HCT116 (cell line): ENCODE measurements at regions of chr6 and their contacts with region 1.

Region 1: GRCh38 chr6:142207265-142207877 is 60.3 kb downstream of the VTA1 start:
- DNase-seq: peak; percentile 26
- ATAC-seq: peak; percentile 92
- H3K4me3 ChIP-seq: no peak overlapping the region
- H3K27ac ChIP-seq: no peak overlapping the region
- H3K4me1 ChIP-seq: no peaks in the 10 kb centered on the region
- H3K27me3 ChIP-seq: no peaks in the 10 kb centered on the region
- CTCF ChIP-seq: peak; percentile 53 to 93 (median 81); a peak in 5 of 6 replicates
- POLR2A ChIP-seq: no peak
- RAD21 ChIP-seq: peak; percentile 81

Region 2: DNA sequence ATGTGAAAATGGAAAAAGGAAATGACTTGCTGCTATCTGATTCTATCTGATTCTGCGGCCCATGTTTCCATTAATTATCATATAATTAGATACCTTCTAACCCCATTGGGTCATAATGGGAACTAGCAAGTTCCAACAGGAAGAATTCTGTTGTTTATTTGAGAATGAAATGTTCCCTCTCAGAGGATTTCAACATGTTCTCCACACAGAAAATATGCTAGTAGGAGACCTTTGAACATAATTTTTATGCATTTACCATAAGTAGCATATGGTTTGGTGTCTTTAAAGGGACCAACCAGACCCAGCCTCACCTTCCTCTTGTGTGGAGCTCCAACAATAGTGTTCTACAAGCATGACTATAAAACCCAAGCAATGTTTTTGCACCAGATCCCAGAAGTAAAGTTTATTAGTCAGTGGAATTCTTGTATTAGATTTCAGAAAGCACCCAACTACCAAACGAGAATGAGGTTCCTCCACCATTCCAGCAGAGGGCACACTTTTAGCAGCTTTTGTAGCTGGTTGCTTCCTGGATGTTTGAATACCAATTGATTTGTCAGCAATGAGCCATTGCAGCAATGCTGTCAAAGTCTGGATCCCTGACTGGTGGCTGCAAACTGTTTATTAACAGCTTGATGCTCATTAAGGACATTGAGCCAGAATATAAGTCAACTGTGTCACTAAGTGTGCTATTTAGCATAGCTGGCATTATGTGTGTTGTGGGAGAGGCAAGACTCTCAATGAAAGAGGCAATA is 218.2 kb before region 1 on chr6:
- CTCF ChIA-PET with region 1: interaction called, 5 read pairs
- POLR2A ChIA-PET with region 1: no interaction called
- RAD21 ChIA-PET with region 1: no interaction called
- intact Hi-C with region 1: loop called (anchors 1 kb)
- DNase-seq: peak; percentile 78
- ATAC-seq: peak; percentile 87
- H3K4me3 ChIP-seq: no peak overlapping the region
- H3K27ac ChIP-seq: 0 out of 2 replicates have a peak overlapping the region, but pooled peaks have one; percentile 18
- H3K4me1 ChIP-seq: peaks cover 0 to 9% of the 10 kb centered on the region in 2 experiments; a peak in 3 of 4 replicates
- H3K27me3 ChIP-seq: no peaks in the 10 kb centered on the region
- CTCF ChIP-seq: peak; percentile 82 to 94 (median 87)
- POLR2A ChIP-seq: no peak
- RAD21 ChIP-seq: peak; percentile 97

Region 3: DNA sequence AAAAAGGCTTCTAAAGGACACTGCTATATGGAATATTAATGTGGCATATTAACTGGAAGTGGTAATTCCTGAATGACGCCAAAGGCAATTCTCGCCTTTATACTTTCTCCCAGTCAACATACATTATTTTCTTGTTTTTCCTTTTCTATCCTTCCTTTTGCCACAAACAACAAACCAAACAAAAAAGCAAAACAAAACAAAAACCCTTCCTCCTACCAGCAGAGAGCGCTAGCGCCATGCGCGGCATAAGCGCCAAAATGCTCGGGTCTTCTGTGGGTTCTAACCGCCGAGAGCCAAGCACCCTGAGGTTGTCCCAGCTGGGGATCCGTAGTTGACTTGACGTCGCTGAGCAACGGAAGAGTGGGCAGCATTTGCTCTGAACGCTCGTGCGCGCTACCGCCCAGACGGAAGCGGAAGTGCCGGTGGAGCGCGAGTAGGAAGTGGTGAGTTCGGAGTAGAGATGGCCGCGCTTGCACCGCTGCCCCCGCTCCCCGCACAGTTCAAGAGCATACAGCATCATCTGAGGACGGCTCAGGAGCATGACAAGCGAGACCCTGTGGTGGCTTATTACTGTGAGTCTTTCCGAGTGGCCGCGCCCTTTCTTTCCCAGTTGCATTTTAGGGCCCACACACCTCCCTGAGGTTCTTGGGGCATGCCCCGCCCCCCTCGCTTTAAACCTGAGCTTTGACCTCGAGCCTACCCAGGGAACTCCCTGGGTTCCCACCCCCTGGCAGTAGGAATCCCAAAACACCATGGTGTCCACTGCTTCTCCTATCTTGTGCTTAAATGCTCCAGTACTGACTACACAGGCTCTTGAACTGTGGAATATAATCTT is 60.3 kb before region 1 on chr6 and contains the starts of genes NMBR and VTA1:
- CTCF ChIA-PET with region 1: interaction called, 5 read pairs
- POLR2A ChIA-PET with region 1: no interaction called
- RAD21 ChIA-PET with region 1: no interaction called
- intact Hi-C with region 1: loop called (anchors 2 kb)
- DNase-seq: peak; percentile 99
- ATAC-seq: peak; percentile 99
- H3K4me3 ChIP-seq: peak within 1 kb of the TSS; percentile 83
- H3K27ac ChIP-seq: peak within 1 kb of the TSS; percentile 27; the same call in 1 of the 2 replicates
- H3K4me1 ChIP-seq: peaks cover 7 to 15% of the 10 kb centered on the region in 2 experiments; a peak in 3 of 4 replicates
- H3K27me3 ChIP-seq: no peaks in the 10 kb centered on the region
- CTCF ChIP-seq: peak; percentile 82 to 89 (median 85)
- POLR2A ChIP-seq: peak; percentile 77
- RAD21 ChIP-seq: peak; percentile 91
- total RNA-seq, gene NMBR: not detected
- total RNA-seq, gene VTA1: 67.8 TPM

Region 4: GRCh38 chr6:142155895-142156757 is 51.2 kb before region 1 on chr6:
- CTCF ChIA-PET with region 1: interaction called, 13 read pairs
- POLR2A ChIA-PET with region 1: no interaction called
- RAD21 ChIA-PET with region 1: interaction called in 1 of 2 experiments, 3 read pairs
- intact Hi-C with region 1: no loop called
- DNase-seq: peak; percentile 2
- ATAC-seq: peak; percentile 62; the same call in 1 of the 2 replicates
- H3K4me3 ChIP-seq: no peak overlapping the region
- H3K27ac ChIP-seq: no peak overlapping the region
- H3K4me1 ChIP-seq: no peaks in the 10 kb centered on the region
- H3K27me3 ChIP-seq: no peaks in the 10 kb centered on the region
- CTCF ChIP-seq: peak in 2 of 3 experiments; percentile 50 to 58; a peak in 3 of 6 replicates
- POLR2A ChIP-seq: no peak
- RAD21 ChIP-seq: peak; percentile 57

Region 5: DNA sequence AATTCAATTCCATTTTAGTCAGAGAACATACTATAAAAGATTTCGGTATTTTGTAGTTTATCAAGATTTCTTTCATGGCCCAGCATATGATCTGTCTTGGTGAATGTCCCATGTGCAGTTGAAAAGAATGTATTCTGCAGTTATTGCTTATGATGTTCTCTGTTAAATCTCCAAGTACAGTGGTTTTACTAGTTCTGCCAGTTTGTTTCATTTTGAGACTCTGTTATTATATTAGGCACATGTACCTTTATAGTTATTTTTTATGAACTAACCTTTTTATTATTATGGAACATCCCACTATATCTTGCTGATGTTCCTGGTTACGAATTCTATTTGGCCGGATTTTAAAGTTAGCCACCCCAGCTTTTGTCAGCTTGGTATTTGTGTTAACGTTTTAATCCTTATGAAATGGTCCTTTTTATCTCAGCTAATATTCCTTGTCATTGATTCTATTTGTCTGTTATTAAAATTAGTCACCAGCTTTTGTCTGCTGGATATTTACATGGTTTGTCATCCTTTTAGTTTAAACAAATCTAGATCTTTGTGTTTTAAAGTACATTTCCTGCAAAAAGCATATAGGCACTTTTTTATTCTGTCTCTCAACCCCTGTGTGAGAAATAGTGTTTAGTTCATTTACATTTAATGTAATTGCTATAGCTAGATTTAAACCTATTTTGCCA is 11.4 kb before region 1 on chr6:
- CTCF ChIA-PET with region 1: interaction called, 21 read pairs
- POLR2A ChIA-PET with region 1: no interaction called
- RAD21 ChIA-PET with region 1: no interaction called
- intact Hi-C with region 1: no loop called
- DNase-seq: no peak
- ATAC-seq: no peak
- H3K4me3 ChIP-seq: no peak overlapping the region
- H3K27ac ChIP-seq: no peak overlapping the region
- H3K4me1 ChIP-seq: no peaks in the 10 kb centered on the region
- H3K27me3 ChIP-seq: no peaks in the 10 kb centered on the region
- CTCF ChIP-seq: no peak
- POLR2A ChIP-seq: no peak
- RAD21 ChIP-seq: no peak

Region 6: GRCh38 chr6:142218446-142218845 is 11.1 kb after region 1 on chr6:
- CTCF ChIA-PET with region 1: interaction called, 15 read pairs
- POLR2A ChIA-PET with region 1: interaction called, 3 read pairs
- RAD21 ChIA-PET with region 1: no interaction called
- intact Hi-C with region 1: no loop called
- DNase-seq: no peak
- ATAC-seq: no peak
- H3K4me3 ChIP-seq: no peak overlapping the region
- H3K27ac ChIP-seq: no peak overlapping the region
- H3K4me1 ChIP-seq: no peaks in the 10 kb centered on the region
- H3K27me3 ChIP-seq: no peaks in the 10 kb centered on the region
- CTCF ChIP-seq: no peak
- POLR2A ChIP-seq: no peak
- RAD21 ChIP-seq: no peak

Region 7: DNA sequence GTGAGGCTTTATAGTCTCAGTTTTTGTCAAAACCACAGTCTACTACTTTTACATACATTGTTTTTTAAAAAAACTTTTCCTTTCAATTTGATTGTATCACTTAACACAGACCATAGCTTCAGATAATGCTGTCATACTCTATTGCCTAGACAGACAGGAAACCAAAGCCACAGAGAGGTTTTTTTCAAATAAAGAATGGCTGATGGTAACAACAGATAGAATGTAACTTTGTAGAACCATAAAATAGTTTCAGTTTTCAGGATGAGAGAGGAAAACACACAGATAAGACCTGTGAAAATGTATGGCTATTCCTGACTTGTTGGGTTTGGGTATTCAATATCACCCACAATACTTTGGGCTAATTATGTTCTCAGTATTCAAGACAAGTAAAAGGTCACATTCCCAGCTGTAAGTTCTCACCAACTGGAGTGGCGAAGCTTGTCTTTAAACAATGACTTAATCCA is 188.4 kb after region 1 on chr6:
- CTCF ChIA-PET with region 1: no interaction called
- POLR2A ChIA-PET with region 1: no interaction called
- RAD21 ChIA-PET with region 1: no interaction called
- intact Hi-C with region 1: no loop called
- DNase-seq: no peak
- ATAC-seq: no peak
- H3K4me3 ChIP-seq: no peak overlapping the region
- H3K27ac ChIP-seq: no peak overlapping the region
- H3K4me1 ChIP-seq: no peaks in the 10 kb centered on the region
- H3K27me3 ChIP-seq: no peaks in the 10 kb centered on the region
- CTCF ChIP-seq: no peak
- POLR2A ChIP-seq: no peak
- RAD21 ChIP-seq: no peak